Heart right ventricle (tissue), 16 donors: ENCODE measurements at regions of chr17 and their contacts with region 1.

Region 1: DNA sequence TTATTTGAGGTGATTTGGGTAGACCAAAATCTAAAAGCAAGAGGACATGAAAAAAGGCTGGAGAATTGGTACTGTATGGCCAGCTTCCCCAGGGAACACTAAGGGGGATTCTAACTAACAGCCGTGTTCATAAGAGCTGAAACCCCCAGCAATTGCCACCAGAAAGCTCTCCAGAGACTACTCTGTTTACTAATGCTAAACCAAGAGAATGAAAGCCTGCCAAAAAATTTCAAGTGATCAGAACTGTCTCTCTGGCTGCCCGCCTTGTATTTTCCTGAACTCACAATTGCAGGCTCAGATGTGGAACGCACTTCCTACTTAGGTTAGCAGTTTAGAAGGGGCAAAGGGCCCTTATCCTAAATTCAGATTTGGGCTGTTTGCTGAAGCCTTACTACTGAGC is 24.1 kb downstream of the MYH10 start:
- DNase-seq: peak in 1 of 2 donors; percentile 36
- ATAC-seq: peak; percentile 61 to 87 (median 80)
- H3K4me3 ChIP-seq: no peak overlapping the region
- H3K27ac ChIP-seq: peak overlapping the region in 8 of 10 donors; percentile 18 to 71 (median 53)
- H3K4me1 ChIP-seq: peaks cover 13 to 50% (median 37%) of the 10 kb centered on the region in 9 donors
- H3K27me3 ChIP-seq: no peaks in the 10 kb centered on the region
- CTCF ChIP-seq: no peak

Region 2: DNA sequence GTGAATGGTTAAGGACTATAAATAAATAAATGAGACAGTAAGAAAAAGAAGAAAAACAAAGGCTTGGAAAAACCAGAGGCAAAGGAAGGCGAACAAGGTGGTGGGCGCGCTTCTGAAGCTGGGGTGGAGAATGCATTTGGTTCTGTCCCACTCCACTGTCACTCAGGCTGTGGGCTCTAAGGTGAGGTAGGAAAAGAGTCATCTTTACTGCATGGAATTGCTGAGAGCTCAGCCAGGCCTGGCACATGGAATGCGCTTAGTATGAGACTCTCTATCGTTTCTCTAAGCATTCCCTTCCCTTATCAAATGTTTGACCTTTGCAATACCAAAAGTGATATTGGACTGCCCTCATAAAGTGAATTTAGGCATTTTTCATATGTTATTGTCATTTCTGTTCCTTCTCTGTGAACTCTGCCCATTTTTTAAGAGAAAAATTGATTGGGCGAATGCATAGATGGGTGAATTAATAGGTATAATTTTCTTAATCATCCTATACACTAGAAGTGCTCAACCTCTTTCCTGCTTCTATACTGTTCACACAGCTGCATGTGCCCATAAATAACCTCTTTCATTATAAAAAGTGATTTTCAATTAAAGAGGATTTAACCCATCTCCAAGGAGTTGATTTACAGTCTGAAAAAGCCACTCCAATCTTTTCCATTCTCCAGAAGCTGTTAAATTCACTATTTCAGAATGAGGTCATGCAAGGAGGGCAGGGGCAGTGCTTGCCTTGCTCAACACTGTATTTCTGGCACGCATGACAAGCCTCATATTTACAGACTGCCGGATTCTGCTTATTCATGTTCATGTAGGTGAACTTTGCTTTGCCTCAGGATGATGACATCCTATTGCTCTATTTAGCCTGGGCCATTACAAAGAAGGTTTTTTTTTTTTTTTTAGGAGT is 63.5 kb before region 1 on chr17:
- intact Hi-C with region 1: loop called in 1 of 10 experiments (anchors 10 kb)
- DNase-seq: peak in 1 of 2 donors; percentile 13
- ATAC-seq: peak; percentile 55 to 90 (median 83)
- H3K4me3 ChIP-seq: no peak overlapping the region
- H3K27ac ChIP-seq: peak overlapping the region in 5 of 10 donors; percentile 10 to 59 (median 38)
- H3K4me1 ChIP-seq: peaks cover 0 to 16% (median 0%) of the 10 kb centered on the region in 9 donors
- H3K27me3 ChIP-seq: no peaks in the 10 kb centered on the region
- CTCF ChIP-seq: no peak

Region 3: DNA sequence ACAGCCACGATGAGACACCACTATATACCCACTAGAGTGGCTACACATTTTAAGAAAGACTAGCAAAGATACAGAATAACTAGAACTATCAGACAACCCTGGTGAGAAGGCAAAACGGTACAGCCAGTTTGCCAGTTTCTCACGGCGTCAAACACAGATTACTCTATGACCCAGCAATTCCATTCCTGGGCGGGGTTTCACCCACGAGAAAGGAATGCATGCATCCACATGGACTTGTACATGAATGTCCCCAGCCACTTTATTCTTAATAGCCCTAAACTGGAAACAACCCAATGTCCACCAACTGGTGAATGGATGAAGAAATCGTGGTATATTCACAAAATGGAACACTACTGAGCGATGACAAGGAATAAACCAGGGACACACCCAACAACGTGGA is 50.3 kb before region 1 on chr17:
- intact Hi-C with region 1: loop called in 1 of 10 experiments (anchors 2 kb)
- DNase-seq: no peak
- ATAC-seq: no peak
- H3K4me3 ChIP-seq: no peak overlapping the region
- H3K27ac ChIP-seq: no peak overlapping the region
- H3K4me1 ChIP-seq: no peaks in the 10 kb centered on the region
- H3K27me3 ChIP-seq: no peaks in the 10 kb centered on the region
- CTCF ChIP-seq: no peak